ENCODE measurements at regions of chr2 and their contacts with region 1.

Region 1: DNA sequence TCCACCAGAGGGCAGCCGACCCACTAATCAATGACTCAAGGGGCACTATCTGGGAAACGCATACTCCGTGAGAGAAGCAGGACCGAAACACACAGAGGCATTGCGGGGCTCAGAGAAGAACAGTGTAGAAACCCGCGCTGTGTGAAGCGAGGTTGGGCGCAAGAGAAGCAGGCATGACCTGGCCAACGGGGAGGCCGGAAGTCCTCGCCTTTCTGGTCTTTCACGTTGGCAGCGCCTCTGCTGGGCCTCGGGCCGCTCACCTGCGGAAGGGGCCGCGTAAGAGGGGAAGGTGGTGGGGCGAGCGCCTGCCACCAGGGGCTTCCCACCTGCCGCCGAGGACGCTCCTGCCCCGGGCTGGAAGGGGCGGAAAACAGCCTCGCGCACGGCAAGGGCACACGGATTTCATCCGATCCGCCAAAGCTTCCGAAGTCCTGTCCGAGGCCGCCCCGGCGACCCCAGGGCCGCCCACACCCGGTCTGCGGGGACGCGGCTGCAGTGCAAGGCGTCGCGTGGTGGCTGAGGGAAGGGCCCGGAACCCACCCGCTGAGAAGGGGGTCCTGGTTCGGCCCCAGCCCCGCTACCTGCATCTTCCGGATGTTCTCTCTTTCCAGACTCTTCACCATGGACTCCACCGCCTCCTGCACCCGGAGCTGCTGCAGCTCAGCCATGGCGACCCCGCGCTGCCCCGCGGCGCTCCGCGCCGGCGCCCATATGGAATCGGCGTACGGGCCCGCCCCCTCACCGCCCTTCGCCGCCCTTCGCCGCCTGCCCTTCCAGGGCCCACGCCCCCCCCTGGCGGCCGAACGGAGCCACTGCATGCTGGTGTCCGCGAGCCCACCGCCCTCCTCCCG is at the start of gene FAM136A:
- DNase-seq: peak; percentile 75 to 92
- H3K4me3 ChIP-seq: peak within 1 kb of the TSS; percentile 92
- H3K4me1 ChIP-seq: peaks cover 17% of the 10 kb centered on the region
- H3K27me3 ChIP-seq: no peaks in the 10 kb centered on the region

Region 2: DNA sequence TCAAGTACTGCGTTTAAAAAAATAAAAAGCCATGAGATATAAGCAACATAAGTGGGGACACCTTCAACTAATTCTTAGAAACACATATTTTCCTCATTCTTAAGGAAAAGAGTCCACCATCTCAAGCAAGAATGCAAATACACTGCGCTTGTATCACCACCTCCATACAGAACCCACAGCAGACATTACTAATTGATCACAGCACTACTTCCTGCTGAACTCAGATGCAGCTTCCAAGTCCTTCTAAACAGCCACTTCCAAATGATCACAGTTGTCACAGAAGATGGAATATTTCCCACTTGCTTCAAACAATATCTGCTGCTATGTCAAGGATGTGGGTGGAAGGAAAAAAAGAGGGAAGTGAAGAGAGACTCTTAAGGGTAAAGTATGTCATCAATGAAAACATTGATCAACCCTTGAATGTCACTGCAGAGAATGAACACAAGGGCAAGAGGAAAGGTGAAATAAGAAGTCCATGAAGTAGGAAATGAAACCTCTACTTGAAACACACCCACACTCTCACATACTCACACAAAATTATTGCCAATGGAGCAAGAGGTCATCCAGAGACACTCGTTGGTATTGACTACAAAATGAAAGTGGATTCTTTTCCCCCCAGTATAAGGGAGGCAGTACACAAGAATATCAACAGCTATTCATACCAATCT is 230.0 kb after region 1 on chr2:
- in situ Hi-C with region 1: no loop called
- DNase-seq: no peak
- H3K4me3 ChIP-seq: no peak overlapping the region
- H3K4me1 ChIP-seq: no peaks in the 10 kb centered on the region
- H3K27me3 ChIP-seq: peaks cover 7% of the 10 kb centered on the region

Region 3: GRCh38 chr2:70647873-70648481 is 346.4 kb after region 1 on chr2:
- in situ Hi-C with region 1: loop called (anchors 10 kb)
- DNase-seq: peak; percentile 59 to 86
- H3K4me3 ChIP-seq: no peak overlapping the region
- H3K4me1 ChIP-seq: 0 out of 2 replicates have a peak, but pooled peaks cover 1% of the 10 kb centered on the region
- H3K27me3 ChIP-seq: no peaks in the 10 kb centered on the region